Heart right ventricle (tissue), 16 donors: ENCODE measurements at regions of chr7 and their contacts with region 1.

Region 1: GRCh38 chr7:82615527-82615926 is 171.9 kb upstream of the CACNA2D1 start:
- DNase-seq: no peak
- ATAC-seq: peak in 3 of 8 donors; percentile 37 to 63 (median 55)
- H3K4me3 ChIP-seq: no peak overlapping the region
- H3K27ac ChIP-seq: peak overlapping the region in 1 of 10 donors; percentile 42
- H3K4me1 ChIP-seq: no peaks in the 10 kb centered on the region
- H3K27me3 ChIP-seq: no peaks in the 10 kb centered on the region
- CTCF ChIP-seq: no peak

Region 2: GRCh38 chr7:82542665-82543064 is 72.9 kb before region 1 on chr7:
- intact Hi-C with region 1: loop called in 1 of 10 experiments (anchors 10 kb)
- DNase-seq: no peak
- ATAC-seq: no peak
- H3K4me3 ChIP-seq: no peak overlapping the region
- H3K27ac ChIP-seq: no peak overlapping the region
- H3K4me1 ChIP-seq: no peaks in the 10 kb centered on the region
- H3K27me3 ChIP-seq: no peaks in the 10 kb centered on the region
- CTCF ChIP-seq: no peak